Activated CD4-positive, alpha-beta T cell treated with anti-CD3 and anti-CD28 coated beads for 36 hours (primary cell): ENCODE measurements at regions of chr5 and their contacts with region 1.

Region 1: GRCh38 chr5:179033004-179033580 is 9.5 kb downstream of the ZNF879 start:
- DNase-seq: no peak
- ATAC-seq: no peak
- H3K4me3 Mint-ChIP-seq: no peak overlapping the region
- H3K27ac Mint-ChIP-seq: no peak overlapping the region
- H3K4me1 Mint-ChIP-seq: no peaks in the 10 kb centered on the region
- H3K27me3 Mint-ChIP-seq: no peaks in the 10 kb centered on the region

Region 2: GRCh38 chr5:178340187-178340586 is 692.9 kb before region 1 on chr5:
- CTCF ChIA-PET with region 1: no interaction called
- POLR2A ChIA-PET with region 1: no interaction called
- intact Hi-C with region 1: no loop called
- DNase-seq: no peak
- ATAC-seq: no peak
- H3K4me3 Mint-ChIP-seq: no peak overlapping the region
- H3K27ac Mint-ChIP-seq: no peak overlapping the region
- H3K4me1 Mint-ChIP-seq: no peaks in the 10 kb centered on the region
- H3K27me3 Mint-ChIP-seq: no peaks in the 10 kb centered on the region

Region 3: DNA sequence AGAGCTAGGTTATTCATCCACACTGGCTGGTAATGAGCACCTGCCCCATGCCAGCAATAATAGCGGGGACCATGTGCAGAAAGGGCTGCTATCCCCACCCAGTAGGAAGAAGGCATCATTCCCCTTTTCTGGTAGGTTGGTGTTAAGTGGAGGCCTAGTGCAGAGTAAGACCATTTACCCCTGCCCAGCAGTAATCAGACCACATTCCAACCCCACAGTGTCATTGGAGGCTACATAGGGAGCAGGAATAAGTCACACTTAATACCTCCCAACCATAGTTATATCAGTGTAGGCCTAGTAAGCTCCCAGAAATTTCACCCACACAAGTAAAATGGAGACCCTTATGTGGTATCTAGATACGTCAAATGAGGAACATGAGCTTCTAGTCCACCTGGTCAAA is 143.0 kb before region 1 on chr5:
- CTCF ChIA-PET with region 1: no interaction called
- POLR2A ChIA-PET with region 1: no interaction called
- intact Hi-C with region 1: loop called in 1 of 2 experiments (anchors 5 kb)
- DNase-seq: no peak
- ATAC-seq: no peak
- H3K4me3 Mint-ChIP-seq: no peak overlapping the region
- H3K27ac Mint-ChIP-seq: no peak overlapping the region
- H3K4me1 Mint-ChIP-seq: no peaks in the 10 kb centered on the region
- H3K27me3 Mint-ChIP-seq: no peaks in the 10 kb centered on the region